ENCODE measurements at regions of chr19 and their contacts with region 1.

Region 1: DNA sequence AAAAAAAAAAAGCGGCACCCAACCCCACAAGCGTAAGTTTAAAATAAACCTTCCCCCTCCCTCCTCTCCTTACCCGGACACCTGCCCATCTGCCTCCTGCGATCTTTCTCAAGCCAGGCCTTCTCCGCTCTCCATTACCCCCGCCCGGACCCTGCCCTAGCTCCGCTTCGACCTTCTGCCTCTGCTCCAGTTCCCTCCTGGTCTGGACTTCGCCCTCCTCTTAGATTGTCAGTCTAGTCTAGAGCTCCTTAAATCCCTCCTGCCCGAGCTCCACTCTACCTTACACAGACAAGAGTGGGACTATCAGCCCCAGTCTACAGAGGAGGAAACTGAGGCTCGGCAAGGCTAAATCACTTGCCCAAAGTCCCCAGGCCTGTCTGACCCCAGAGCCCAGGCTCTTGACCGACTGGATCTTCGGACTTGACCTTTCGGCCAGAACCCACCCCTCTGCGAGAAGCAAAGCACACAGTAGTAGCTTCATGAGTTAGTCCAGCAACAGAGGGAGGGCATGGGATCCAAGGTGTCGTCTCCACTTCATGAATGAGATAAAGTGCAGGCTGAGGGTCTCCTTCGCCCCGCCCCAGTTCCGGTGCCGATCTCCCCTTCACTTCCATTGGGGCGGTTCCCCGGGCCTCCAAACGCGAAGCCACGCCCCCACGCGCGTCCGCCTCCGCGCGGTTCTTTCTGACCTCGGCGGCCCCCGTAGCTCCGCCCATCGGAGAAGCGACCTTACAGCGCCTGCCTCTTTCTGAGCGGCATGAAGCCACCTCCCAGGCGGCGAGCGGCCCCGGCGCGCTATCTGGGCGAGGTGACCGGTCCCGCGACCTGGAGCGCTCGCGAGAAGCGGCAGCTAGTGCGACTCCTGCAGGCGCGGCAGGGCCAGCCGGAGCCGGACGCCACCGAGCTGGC is at the start of gene SNAPC2:
- DNase-seq: peak; percentile 89
- ATAC-seq: peak; percentile 53
- H3K4me3 ChIP-seq: peak within 1 kb of the TSS; percentile 85 to 89 (median 87)
- H3K27ac ChIP-seq: peak within 1 kb of the TSS; percentile 92
- H3K4me1 ChIP-seq: peaks cover 41% of the 10 kb centered on the region
- H3K27me3 ChIP-seq: no peaks in the 10 kb centered on the region; a peak in 1 of 5 replicates
- CTCF ChIP-seq: no peak
- EP300 ChIP-seq: no peak; a peak in 1 of 4 replicates
- POLR2A ChIP-seq: peak; percentile 40 to 88; a peak in 3 of 4 replicates
- RAD21 ChIP-seq: peak; percentile 55
- total RNA-seq, gene SNAPC2: 9.5 and 10.2 TPM in 2 replicates

Region 2: GRCh38 chr19:7815325-7815724 is 104.5 kb before region 1 on chr19:
- CTCF ChIA-PET with region 1: no interaction called
- POLR2A ChIA-PET with region 1: no interaction called
- in situ Hi-C with region 1: no loop called
- intact Hi-C with region 1: no loop called
- DNase-seq: no peak
- ATAC-seq: no peak
- H3K4me3 ChIP-seq: no peak overlapping the region
- H3K27ac ChIP-seq: no peak overlapping the region
- H3K4me1 ChIP-seq: no peaks in the 10 kb centered on the region
- H3K27me3 ChIP-seq: peaks cover 0 to 3% of the 10 kb centered on the region in 2 experiments; a peak in 2 of 5 replicates
- CTCF ChIP-seq: no peak
- EP300 ChIP-seq: no peak
- POLR2A ChIP-seq: no peak
- RAD21 ChIP-seq: no peak

Region 3: GRCh38 chr19:7852851-7853769 is 66.8 kb before region 1 on chr19:
- CTCF ChIA-PET with region 1: interaction called, 28 read pairs
- POLR2A ChIA-PET with region 1: interaction called, 19 read pairs
- in situ Hi-C with region 1: loop called (anchors 5 kb)
- intact Hi-C with region 1: loop called (anchors 2 kb)
- DNase-seq: peak; percentile 90
- ATAC-seq: peak; percentile 93
- H3K4me3 ChIP-seq: peak overlapping the region in 1 of 3 experiments; percentile 60; a peak in 3 of 6 replicates
- H3K27ac ChIP-seq: peak overlapping the region; percentile 58
- H3K4me1 ChIP-seq: peaks cover 24% of the 10 kb centered on the region
- H3K27me3 ChIP-seq: peaks cover 0 to 5% of the 10 kb centered on the region in 2 experiments; a peak in 2 of 5 replicates
- CTCF ChIP-seq: peak; percentile 93
- EP300 ChIP-seq: no peak; a peak in 1 of 4 replicates
- POLR2A ChIP-seq: no peak
- RAD21 ChIP-seq: peak; percentile 98

Region 4: DNA sequence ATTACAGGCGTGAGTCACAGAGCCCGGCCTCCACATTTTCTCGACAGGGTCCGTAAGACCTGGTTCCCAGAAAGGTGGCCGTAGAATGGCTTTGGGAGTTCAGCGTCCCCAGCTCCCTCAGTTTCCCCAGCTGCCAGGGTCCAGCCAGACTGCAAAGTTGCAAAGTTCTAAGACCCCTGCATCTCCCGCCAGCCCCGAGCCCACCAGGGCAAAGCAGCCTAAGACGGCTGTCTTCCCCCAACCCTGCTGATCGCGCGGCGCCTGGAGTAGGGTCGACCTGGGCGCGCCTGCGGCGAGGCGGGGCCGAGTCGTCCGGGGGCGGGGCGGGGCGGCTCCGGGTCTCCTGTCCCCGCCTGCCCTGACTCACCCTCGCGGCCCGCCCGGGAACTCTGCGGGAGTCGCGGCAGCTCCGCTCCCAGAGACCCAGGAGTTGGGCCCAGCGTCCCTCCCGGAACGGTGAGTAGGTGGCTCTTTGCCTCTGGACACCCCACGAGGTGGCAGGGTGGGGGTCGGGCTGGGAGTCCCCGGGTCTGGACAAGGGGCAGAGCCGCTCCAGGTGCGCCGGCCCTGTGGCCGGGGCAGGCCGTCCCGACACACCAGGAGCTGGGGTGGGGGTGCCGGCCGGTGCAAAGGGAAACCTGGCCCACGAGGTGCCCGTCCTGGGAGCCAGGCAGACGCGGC is 31.6 kb before region 1 on chr19 and contains the start of gene LRRC8E:
- CTCF ChIA-PET with region 1: no interaction called
- POLR2A ChIA-PET with region 1: interaction called, 40 read pairs
- in situ Hi-C with region 1: no loop called
- intact Hi-C with region 1: no loop called
- DNase-seq: peak; percentile 59
- ATAC-seq: peak; percentile 94
- H3K4me3 ChIP-seq: peak within 1 kb of the TSS; percentile 82 to 93 (median 90)
- H3K27ac ChIP-seq: peak within 1 kb of the TSS; percentile 58
- H3K4me1 ChIP-seq: peaks cover 66% of the 10 kb centered on the region
- H3K27me3 ChIP-seq: no peaks in the 10 kb centered on the region
- CTCF ChIP-seq: no peak
- EP300 ChIP-seq: no peak
- POLR2A ChIP-seq: peak; percentile 71 to 85
- RAD21 ChIP-seq: no peak
- total RNA-seq, gene LRRC8E: 4.0 and 8.0 TPM in 2 replicates

Region 5: GRCh38 chr19:7903244-7904073 is 16.4 kb before region 1 on chr19 and contains the start of gene MAP2K7:
- CTCF ChIA-PET with region 1: no interaction called
- POLR2A ChIA-PET with region 1: interaction called, 83 read pairs
- in situ Hi-C with region 1: no loop called
- intact Hi-C with region 1: no loop called
- DNase-seq: peak; percentile 97
- ATAC-seq: peak; percentile 66
- H3K4me3 ChIP-seq: peak within 1 kb of the TSS; percentile 90 to 100 (median 95)
- H3K27ac ChIP-seq: peak within 1 kb of the TSS; percentile 91
- H3K4me1 ChIP-seq: peaks cover 43% of the 10 kb centered on the region
- H3K27me3 ChIP-seq: no peaks in the 10 kb centered on the region; a peak in 1 of 5 replicates
- CTCF ChIP-seq: peak; percentile 99
- EP300 ChIP-seq: no peak
- POLR2A ChIP-seq: peak; percentile 88 to 99
- RAD21 ChIP-seq: peak; percentile 72; the same call in 1 of the 2 replicates
- total RNA-seq, gene MAP2K7: 8.7 and 10.8 TPM in 2 replicates

Region 6: GRCh38 chr19:7943444-7944176 is 23.7 kb after region 1 on chr19 and contains the start of gene TIMM44:
- CTCF ChIA-PET with region 1: no interaction called
- POLR2A ChIA-PET with region 1: interaction called, 85 read pairs
- in situ Hi-C with region 1: no loop called
- intact Hi-C with region 1: no loop called
- DNase-seq: peak; percentile 99
- ATAC-seq: peak; percentile 98
- H3K4me3 ChIP-seq: peak within 1 kb of the TSS; percentile 65 to 98 (median 91)
- H3K27ac ChIP-seq: peak within 1 kb of the TSS; percentile 90
- H3K4me1 ChIP-seq: peaks cover 38% of the 10 kb centered on the region
- H3K27me3 ChIP-seq: peaks cover 0 to 3% of the 10 kb centered on the region in 2 experiments; a peak in 1 of 5 replicates
- CTCF ChIP-seq: no peak
- EP300 ChIP-seq: no peak
- POLR2A ChIP-seq: peak; percentile 98 to 99
- RAD21 ChIP-seq: peak; percentile 59
- total RNA-seq, gene TIMM44: 71.5 and 72.6 TPM in 2 replicates

Measured in HepG2 (cell line).